GM10248 (cell line): ENCODE measurements at regions of chr1 and their contacts with region 1.

Region 1: DNA sequence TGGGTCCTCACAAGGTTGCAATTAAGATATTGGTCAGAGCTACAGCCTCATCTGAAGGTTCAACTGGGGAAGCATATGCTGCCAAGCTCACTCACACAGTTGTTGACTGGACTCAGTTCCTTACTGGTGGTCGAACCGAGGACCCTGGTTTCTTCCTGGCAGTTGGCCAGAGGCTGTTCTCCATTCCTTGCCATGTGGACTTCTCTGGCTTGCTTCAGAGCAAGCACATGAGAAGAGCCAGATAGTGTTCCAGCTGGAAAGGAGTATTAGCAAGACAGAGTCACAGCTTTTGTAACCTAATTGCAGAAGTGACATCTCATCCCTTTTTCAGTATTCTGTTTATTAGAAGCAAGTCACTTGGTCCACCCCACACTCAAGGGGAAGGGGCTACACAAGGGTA is 23.6 kb downstream of the POU2F1 start:
- DNase-seq: no peak
- CTCF ChIP-seq: no peak

Region 2: GRCh38 chr1:167229719-167230385 is 14.4 kb before region 1 on chr1:
- CTCF ChIA-PET with region 1: interaction called, 31 read pairs
- POLR2A ChIA-PET with region 1: interaction called, 3 read pairs
- DNase-seq: no peak
- CTCF ChIP-seq: no peak

Region 3: GRCh38 chr1:167263819-167264464 is 19.7 kb after region 1 on chr1:
- CTCF ChIA-PET with region 1: interaction called, 43 read pairs
- POLR2A ChIA-PET with region 1: no interaction called
- DNase-seq: no peak
- CTCF ChIP-seq: no peak